Activated CD4-positive, alpha-beta T cell treated with anti-CD3 and anti-CD28 coated beads, Interleukin-2, amount 10 ng/mL, durations not matched to agents 24 days and 14 days (primary cell): ENCODE measurements at regions of chr5 and their contacts with region 1.

Region 1: GRCh38 chr5:159971931-159972461 is 36.9 kb upstream of the TTC1 start:
- DNase-seq: no peak
- H3K4me3 Mint-ChIP-seq: no peak overlapping the region
- H3K27ac Mint-ChIP-seq: no peak overlapping the region
- H3K4me1 Mint-ChIP-seq: peaks cover 4% of the 10 kb centered on the region
- H3K27me3 Mint-ChIP-seq: peaks cover 62% of the 10 kb centered on the region

Region 2: GRCh38 chr5:158390577-158390976 is 1581.4 kb before region 1 on chr5:
- intact Hi-C with region 1: no loop called
- DNase-seq: no peak
- H3K4me3 Mint-ChIP-seq: no peak overlapping the region
- H3K27ac Mint-ChIP-seq: no peak overlapping the region
- H3K4me1 Mint-ChIP-seq: no peaks in the 10 kb centered on the region
- H3K27me3 Mint-ChIP-seq: no peaks in the 10 kb centered on the region

Region 3: GRCh38 chr5:159444441-159445082 is 527.4 kb before region 1 on chr5:
- intact Hi-C with region 1: loop called (anchors 5 kb)
- DNase-seq: peak; percentile 61
- H3K4me3 Mint-ChIP-seq: no peak overlapping the region
- H3K27ac Mint-ChIP-seq: no peak overlapping the region
- H3K4me1 Mint-ChIP-seq: peaks cover 5% of the 10 kb centered on the region
- H3K27me3 Mint-ChIP-seq: peaks cover 62% of the 10 kb centered on the region